CD4-positive, alpha-beta memory T cell (primary cell): ENCODE measurements at regions of chr7 and their contacts with region 1.

Region 1: GRCh38 chr7:4610768-4611467 is 71.2 kb upstream of the FOXK1 start:
- DNase-seq: peak; percentile 62 to 73 (median 67)
- H3K4me3 ChIP-seq: no peak overlapping the region
- H3K4me3 Mint-ChIP-seq: no peak overlapping the region
- H3K27ac ChIP-seq: no peak overlapping the region
- H3K27ac Mint-ChIP-seq: peak overlapping the region in 1 of 7 donors; percentile 70
- H3K4me1 ChIP-seq: peaks cover 4% of the 10 kb centered on the region
- H3K4me1 Mint-ChIP-seq: peaks cover 7 to 13% (median 9%) of the 10 kb centered on the region in 4 donors
- H3K27me3 ChIP-seq: no peaks in the 10 kb centered on the region
- H3K27me3 Mint-ChIP-seq: peaks cover 1 to 3% of the 10 kb centered on the region in 2 donors

Region 2: DNA sequence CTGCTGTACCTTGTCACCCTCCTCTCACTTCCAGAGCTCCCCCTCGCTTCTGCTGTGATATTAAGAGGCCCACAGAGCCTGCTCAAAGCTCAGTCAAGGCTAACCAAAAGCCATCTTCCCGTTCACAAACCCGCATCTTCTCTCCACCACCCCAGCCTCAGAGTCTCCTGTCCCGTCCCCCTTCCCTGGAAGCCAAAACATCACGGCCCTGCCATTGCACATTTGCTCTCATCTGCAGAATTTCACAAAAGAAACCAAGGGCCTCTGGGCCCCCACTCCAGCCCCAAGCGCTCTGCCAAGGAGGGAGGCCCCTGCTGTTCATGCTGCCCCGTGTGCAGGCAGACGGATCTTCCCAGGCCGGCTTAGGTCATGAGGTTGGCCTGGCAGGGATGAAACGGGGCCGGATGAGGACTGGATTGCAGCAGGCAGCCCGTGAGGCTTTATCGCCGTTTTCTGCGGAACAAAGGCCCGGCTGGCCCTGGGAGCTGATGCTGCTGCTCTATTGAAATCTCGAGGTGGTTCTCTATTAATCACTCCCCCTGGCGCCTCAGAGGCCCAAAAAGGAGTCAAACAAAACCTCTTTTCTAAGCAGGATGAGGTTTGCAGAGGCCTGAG is 39.6 kb after region 1 on chr7:
- CTCF ChIA-PET with region 1: no interaction called
- POLR2A ChIA-PET with region 1: no interaction called
- intact Hi-C with region 1: no loop called
- DNase-seq: no peak
- H3K4me3 ChIP-seq: no peak overlapping the region
- H3K4me3 Mint-ChIP-seq: no peak overlapping the region
- H3K27ac ChIP-seq: no peak overlapping the region
- H3K27ac Mint-ChIP-seq: no peak overlapping the region
- H3K4me1 ChIP-seq: no peaks in the 10 kb centered on the region
- H3K4me1 Mint-ChIP-seq: no peaks in the 10 kb centered on the region
- H3K27me3 ChIP-seq: no peaks in the 10 kb centered on the region
- H3K27me3 Mint-ChIP-seq: no peaks in the 10 kb centered on the region

Region 3: GRCh38 chr7:4753711-4754432 is 143.0 kb after region 1 on chr7:
- CTCF ChIA-PET with region 1: interaction called, 27 read pairs
- POLR2A ChIA-PET with region 1: interaction called, 3 read pairs
- intact Hi-C with region 1: loop called (anchors 1 kb)
- DNase-seq: peak; percentile 77 to 79 (median 78)
- H3K4me3 ChIP-seq: no peak overlapping the region
- H3K4me3 Mint-ChIP-seq: peak overlapping the region in 1 of 8 donors; percentile 29
- H3K27ac ChIP-seq: no peak overlapping the region
- H3K27ac Mint-ChIP-seq: peak overlapping the region in 4 of 7 donors; percentile 22 to 77 (median 35)
- H3K4me1 ChIP-seq: peaks cover 22% of the 10 kb centered on the region
- H3K4me1 Mint-ChIP-seq: peaks cover 11 to 25% (median 15%) of the 10 kb centered on the region in 4 donors
- H3K27me3 ChIP-seq: no peaks in the 10 kb centered on the region
- H3K27me3 Mint-ChIP-seq: no peaks in the 10 kb centered on the region

Region 4: DNA sequence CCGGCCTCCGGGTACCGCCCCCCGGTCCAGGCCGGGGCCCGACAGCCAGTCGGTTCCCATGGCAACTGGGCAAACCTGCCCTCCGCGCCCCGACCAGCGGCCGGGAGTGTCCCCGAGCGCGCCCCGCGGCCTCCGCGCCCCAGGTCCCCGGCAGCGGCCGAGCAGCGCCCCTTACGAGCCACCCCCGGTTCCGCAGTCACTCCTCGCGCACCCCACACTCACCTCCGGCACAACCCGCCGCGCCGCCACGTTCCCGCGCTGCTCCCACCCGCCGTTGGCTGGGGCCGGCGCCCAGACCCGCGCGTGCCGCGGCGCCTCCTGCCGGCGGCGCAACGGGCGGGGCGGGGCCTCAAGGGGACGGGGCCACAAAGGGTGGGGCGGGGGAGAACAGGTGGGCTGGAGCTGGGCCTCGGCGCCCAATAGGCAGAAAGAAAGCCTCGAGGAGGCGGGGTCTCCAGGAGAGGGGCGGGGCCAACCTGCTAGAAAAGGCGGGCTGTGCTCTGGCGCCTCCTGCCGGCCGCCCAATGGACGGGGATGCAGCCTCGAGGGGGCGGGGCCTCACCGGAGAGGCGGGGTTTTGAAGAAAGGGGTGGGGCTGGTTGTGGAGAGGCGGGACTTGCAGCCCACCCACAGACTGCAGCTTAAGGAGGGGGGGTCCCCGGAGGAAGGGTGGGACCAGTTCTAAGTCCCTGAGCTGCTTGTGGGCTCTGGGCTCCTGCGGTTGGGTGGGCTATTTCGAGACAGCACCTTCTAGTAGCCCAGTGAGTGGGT is 272.6 kb after region 1 on chr7 and contains the start of gene RADIL:
- CTCF ChIA-PET with region 1: no interaction called
- POLR2A ChIA-PET with region 1: no interaction called
- intact Hi-C with region 1: loop called (anchors 10 kb)
- DNase-seq: peak; percentile 72 to 84 (median 84)
- H3K4me3 ChIP-seq: no peak within 1 kb of the TSS
- H3K4me3 Mint-ChIP-seq: peak within 1 kb of the TSS; percentile 45 to 79 (median 70)
- H3K27ac ChIP-seq: no peak within 1 kb of the TSS
- H3K27ac Mint-ChIP-seq: no peak within 1 kb of the TSS
- H3K4me1 ChIP-seq: peaks cover 7% of the 10 kb centered on the region
- H3K4me1 Mint-ChIP-seq: peaks cover 5 to 12% (median 8%) of the 10 kb centered on the region in 4 donors
- H3K27me3 ChIP-seq: peaks cover 4% of the 10 kb centered on the region
- H3K27me3 Mint-ChIP-seq: peaks cover 20 to 25% of the 10 kb centered on the region in 2 donors
- total RNA-seq, gene RADIL: not detected